IMR-90 (cell line): ENCODE measurements at regions of chr9 and their contacts with region 1.

Region 1: GRCh38 chr9:16515879-16516301 is 354.6 kb downstream of the BNC2 start:
- DNase-seq: peak; percentile 84
- ATAC-seq: peak; percentile 81
- H3K4me3 ChIP-seq: no peak overlapping the region
- H3K27ac ChIP-seq: peak overlapping the region; percentile 100
- H3K4me1 ChIP-seq: peaks cover 18% of the 10 kb centered on the region
- H3K27me3 ChIP-seq: no peaks in the 10 kb centered on the region
- CTCF ChIP-seq: no peak
- POLR2A ChIP-seq: no peak
- RAD21 ChIP-seq: no peak

Region 2: GRCh38 chr9:16505199-16505598 is 10.7 kb before region 1 on chr9:
- CTCF ChIA-PET with region 1: no interaction called
- POLR2A ChIA-PET with region 1: interaction called, 10 read pairs
- dilution Hi-C with region 1: no loop called
- in situ Hi-C with region 1: no loop called
- intact Hi-C with region 1: no loop called
- DNase-seq: peak; percentile 80
- ATAC-seq: peak; percentile 84
- H3K4me3 ChIP-seq: no peak overlapping the region
- H3K27ac ChIP-seq: peak overlapping the region; percentile 95
- H3K4me1 ChIP-seq: peaks cover 16% of the 10 kb centered on the region
- H3K27me3 ChIP-seq: no peaks in the 10 kb centered on the region
- CTCF ChIP-seq: no peak
- POLR2A ChIP-seq: no peak
- RAD21 ChIP-seq: no peak

Region 3: GRCh38 chr9:16626577-16627131 is 110.8 kb after region 1 on chr9:
- CTCF ChIA-PET with region 1: no interaction called
- POLR2A ChIA-PET with region 1: no interaction called
- dilution Hi-C with region 1: no loop called
- in situ Hi-C with region 1: no loop called
- intact Hi-C with region 1: loop called (anchors 5 kb)
- DNase-seq: peak; percentile 89
- ATAC-seq: peak; percentile 84
- H3K4me3 ChIP-seq: no peak overlapping the region
- H3K27ac ChIP-seq: peak overlapping the region; percentile 42
- H3K4me1 ChIP-seq: peaks cover 26% of the 10 kb centered on the region
- H3K27me3 ChIP-seq: no peaks in the 10 kb centered on the region
- CTCF ChIP-seq: no peak
- POLR2A ChIP-seq: no peak
- RAD21 ChIP-seq: no peak